Right lobe of liver (tissue), 6 donors: ENCODE measurements at regions of chr15 and their contacts with region 1.

Region 1: GRCh38 chr15:65192016-65192415 is 6.9 kb upstream of the CLPX start:
- DNase-seq: no peak
- ATAC-seq: peak in 2 of 4 donors; percentile 19 to 36
- H3K4me3 ChIP-seq: no peak overlapping the region
- H3K27ac ChIP-seq: no peak overlapping the region
- H3K4me1 ChIP-seq: no peaks in the 10 kb centered on the region
- H3K27me3 ChIP-seq: no peaks in the 10 kb centered on the region
- CTCF ChIP-seq: no peak
- POLR2A ChIP-seq: no peak

Region 2: DNA sequence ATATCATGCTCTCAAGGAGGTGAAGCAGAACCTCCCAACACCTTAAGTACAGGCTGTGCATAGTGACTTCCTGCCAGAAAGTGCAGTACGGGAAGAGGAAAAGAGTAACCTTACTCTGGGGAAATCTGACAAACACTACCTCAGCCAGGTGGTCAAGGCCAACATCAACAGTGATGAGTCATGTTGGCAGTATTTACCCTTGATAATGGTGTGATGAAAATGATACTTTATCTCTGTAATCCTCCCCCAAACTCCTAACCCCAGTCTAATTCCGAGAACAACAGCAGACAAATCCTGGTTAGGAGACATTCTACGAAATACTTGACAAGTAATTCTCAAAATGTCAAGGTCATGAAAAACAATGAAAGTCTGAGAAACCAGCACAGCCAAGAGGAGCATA is 253.8 kb before region 1 on chr15:
- intact Hi-C with region 1: no loop called
- DNase-seq: no peak
- ATAC-seq: peak; percentile 90 to 95 (median 93)
- H3K4me3 ChIP-seq: no peak overlapping the region
- H3K27ac ChIP-seq: peak overlapping the region in 2 of 3 donors; percentile 16 to 69
- H3K4me1 ChIP-seq: peaks cover 0 to 7% (median 2%) of the 10 kb centered on the region in 4 donors
- H3K27me3 ChIP-seq: no peaks in the 10 kb centered on the region
- CTCF ChIP-seq: no peak
- POLR2A ChIP-seq: no peak

Region 3: DNA sequence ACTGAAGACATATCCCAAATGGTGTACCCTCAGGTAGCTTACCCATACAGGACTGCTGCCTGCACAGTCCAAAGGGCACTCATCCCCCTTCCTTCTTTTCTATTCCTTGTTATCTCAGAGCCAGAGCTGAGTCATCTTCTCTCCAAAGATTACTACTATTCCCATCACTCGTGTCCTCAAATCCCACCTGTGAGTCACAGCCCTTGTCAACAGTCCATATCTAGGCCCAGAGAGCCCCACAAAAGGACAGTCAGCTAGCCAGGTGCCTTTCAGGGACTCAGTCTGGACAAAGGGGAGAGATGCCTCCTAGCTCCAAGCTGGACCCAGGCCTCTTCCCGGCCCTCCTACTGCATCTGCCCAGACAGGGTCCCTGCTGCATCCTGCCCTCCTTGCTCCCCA is 83.7 kb after region 1 on chr15:
- intact Hi-C with region 1: loop called in 1 of 2 experiments (anchors 10 kb)
- DNase-seq: no peak
- ATAC-seq: peak in 1 of 4 donors; percentile 74
- H3K4me3 ChIP-seq: no peak overlapping the region
- H3K27ac ChIP-seq: no peak overlapping the region
- H3K4me1 ChIP-seq: no peaks in the 10 kb centered on the region
- H3K27me3 ChIP-seq: no peaks in the 10 kb centered on the region
- CTCF ChIP-seq: no peak
- POLR2A ChIP-seq: no peak

Region 4: DNA sequence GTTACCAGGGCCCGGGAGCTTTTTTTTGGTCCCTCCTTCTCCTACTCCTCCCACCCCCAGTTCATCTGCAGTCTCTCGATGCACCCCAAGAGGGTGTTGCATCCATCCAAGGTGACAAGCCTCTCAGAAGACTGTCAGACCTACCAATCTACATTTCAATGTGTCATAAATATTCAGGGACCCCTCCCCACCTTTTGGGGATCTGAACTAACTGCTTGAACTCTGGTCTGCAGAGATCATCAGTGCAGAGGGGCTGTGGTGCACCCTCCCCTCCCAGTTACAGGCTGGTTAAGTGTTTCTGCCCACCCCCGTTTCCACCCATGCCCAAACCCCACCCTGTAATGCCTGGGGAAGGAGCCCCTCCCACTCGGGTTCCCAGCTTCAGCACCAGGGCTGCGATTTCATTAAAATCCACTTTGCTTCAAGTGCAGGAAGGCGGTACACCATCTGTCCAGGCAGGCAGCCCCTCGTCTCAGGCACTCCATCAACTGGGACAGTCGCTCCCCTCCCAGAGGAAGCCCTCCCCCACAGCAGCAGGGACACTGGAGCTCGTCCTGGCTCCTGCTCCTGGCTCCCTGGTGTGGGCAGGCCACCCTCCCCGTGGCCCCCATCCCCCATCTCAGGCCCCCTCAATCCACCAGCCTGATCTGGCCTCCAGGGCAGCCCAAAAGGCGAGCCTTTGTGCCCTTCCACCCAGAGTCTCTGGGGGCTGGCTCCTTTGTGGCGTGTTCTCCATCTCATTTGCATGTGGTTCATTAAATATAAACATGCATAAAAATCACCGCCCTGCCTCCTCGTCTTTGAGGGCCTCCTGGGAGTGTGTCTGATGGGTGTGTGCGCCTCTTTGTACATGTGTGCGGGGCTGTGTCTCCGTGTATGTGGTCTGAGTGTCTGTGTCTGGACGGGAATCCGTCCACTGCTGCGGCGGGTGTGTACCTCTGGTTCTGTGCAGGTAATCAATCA is 144.8 kb after region 1 on chr15:
- intact Hi-C with region 1: no loop called
- DNase-seq: peak in 1 of 3 donors; percentile 33
- ATAC-seq: no peak
- H3K4me3 ChIP-seq: no peak overlapping the region
- H3K27ac ChIP-seq: no peak overlapping the region
- H3K4me1 ChIP-seq: no peaks in the 10 kb centered on the region
- H3K27me3 ChIP-seq: no peaks in the 10 kb centered on the region
- CTCF ChIP-seq: no peak
- POLR2A ChIP-seq: no peak

Region 5: DNA sequence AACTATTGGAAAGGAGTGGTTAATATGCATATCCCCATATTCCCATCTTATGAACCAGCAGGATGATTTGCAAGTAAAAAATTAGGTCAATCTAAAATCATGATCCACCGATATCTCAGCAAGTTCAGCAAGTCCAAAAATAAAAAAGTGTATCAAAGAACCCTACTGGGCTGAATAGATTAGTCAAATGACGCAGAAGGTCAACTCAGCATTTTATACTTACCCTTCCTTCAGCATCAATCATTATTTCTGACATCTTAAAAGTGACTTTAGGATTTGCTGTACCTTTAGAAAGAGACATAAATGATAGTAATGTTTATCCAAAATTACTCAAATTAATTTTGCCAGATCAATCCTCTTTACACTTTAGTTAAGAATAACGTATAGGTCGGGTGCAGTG is 292.9 kb after region 1 on chr15:
- intact Hi-C with region 1: no loop called
- DNase-seq: no peak
- ATAC-seq: no peak
- H3K4me3 ChIP-seq: no peak overlapping the region
- H3K27ac ChIP-seq: no peak overlapping the region
- H3K4me1 ChIP-seq: no peaks in the 10 kb centered on the region
- H3K27me3 ChIP-seq: no peaks in the 10 kb centered on the region
- CTCF ChIP-seq: no peak
- POLR2A ChIP-seq: no peak